Activated CD4-positive, alpha-beta T cell treated with anti-CD3 and anti-CD28 coated beads, Interleukin-2, amount 10 ng/mL, durations not matched to agents 24 days and 14 days (primary cell): ENCODE measurements at regions of chr17 and their contacts with region 1.

Region 1: DNA sequence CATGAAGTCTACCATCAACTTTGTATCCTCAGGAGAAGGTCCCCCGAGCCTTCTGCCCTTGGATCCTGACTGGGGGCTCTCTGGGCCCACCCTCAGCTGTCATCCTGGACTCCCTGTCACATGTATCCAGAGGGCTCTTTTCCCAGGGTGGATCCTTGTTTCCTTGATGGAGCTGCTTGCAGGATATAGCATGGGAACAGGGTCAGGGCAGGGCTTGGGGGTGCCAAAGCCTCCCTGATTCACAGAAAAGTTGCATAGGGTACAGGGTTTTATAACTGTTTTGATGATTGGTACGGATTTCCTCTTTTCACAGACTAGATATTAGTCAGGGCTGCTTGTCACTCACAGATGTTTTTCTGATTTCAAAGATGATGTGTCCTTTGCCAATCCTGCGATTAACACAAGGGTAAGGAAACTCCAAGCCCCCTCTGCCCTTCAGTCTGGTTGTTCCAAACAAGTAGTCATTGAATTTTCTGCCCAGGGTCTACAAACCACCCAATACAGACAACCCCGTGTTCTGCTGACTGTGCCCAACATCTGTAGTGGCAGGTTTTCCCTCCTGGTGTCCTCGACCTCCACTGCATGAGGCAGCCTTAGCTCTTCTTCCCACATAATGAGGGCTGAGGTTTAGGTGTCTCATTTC is 20.6 kb upstream of the SLC35G3 start:
- DNase-seq: peak; percentile 82
- H3K4me3 Mint-ChIP-seq: peak overlapping the region; percentile 80
- H3K27ac Mint-ChIP-seq: peak overlapping the region; percentile 90
- H3K4me1 Mint-ChIP-seq: peaks cover 78% of the 10 kb centered on the region
- H3K27me3 Mint-ChIP-seq: no peaks in the 10 kb centered on the region

Region 2: GRCh38 chr17:35141681-35142466 is 72.9 kb before region 1 on chr17 and contains the start of gene NLE1:
- intact Hi-C with region 1: loop called (anchors 2 kb)
- DNase-seq: peak; percentile 97
- H3K4me3 Mint-ChIP-seq: peak within 1 kb of the TSS; percentile 83
- H3K27ac Mint-ChIP-seq: peak within 1 kb of the TSS; percentile 81
- H3K4me1 Mint-ChIP-seq: peaks cover 17% of the 10 kb centered on the region
- H3K27me3 Mint-ChIP-seq: no peaks in the 10 kb centered on the region
- total RNA-seq, gene NLE1: 45.3 and 47.9 TPM in 2 replicates

Region 3: GRCh38 chr17:35183332-35183731 is 31.4 kb before region 1 on chr17:
- intact Hi-C with region 1: loop called (anchors 5 kb)
- DNase-seq: no peak
- H3K4me3 Mint-ChIP-seq: no peak overlapping the region
- H3K27ac Mint-ChIP-seq: no peak overlapping the region
- H3K4me1 Mint-ChIP-seq: peaks cover 35% of the 10 kb centered on the region
- H3K27me3 Mint-ChIP-seq: no peaks in the 10 kb centered on the region

Region 4: GRCh38 chr17:35254107-35254802 is 39.5 kb after region 1 on chr17:
- intact Hi-C with region 1: no loop called
- DNase-seq: no peak
- H3K4me3 Mint-ChIP-seq: no peak overlapping the region
- H3K27ac Mint-ChIP-seq: peak overlapping the region; percentile 6
- H3K4me1 Mint-ChIP-seq: peaks cover 38% of the 10 kb centered on the region
- H3K27me3 Mint-ChIP-seq: no peaks in the 10 kb centered on the region

Region 5: GRCh38 chr17:35286120-35286781 is 71.5 kb after region 1 on chr17:
- intact Hi-C with region 1: loop called (anchors 1 kb)
- DNase-seq: peak; percentile 66
- H3K4me3 Mint-ChIP-seq: no peak overlapping the region
- H3K27ac Mint-ChIP-seq: peak overlapping the region; percentile 14
- H3K4me1 Mint-ChIP-seq: peaks cover 26% of the 10 kb centered on the region
- H3K27me3 Mint-ChIP-seq: peaks cover 9% of the 10 kb centered on the region

Region 6: DNA sequence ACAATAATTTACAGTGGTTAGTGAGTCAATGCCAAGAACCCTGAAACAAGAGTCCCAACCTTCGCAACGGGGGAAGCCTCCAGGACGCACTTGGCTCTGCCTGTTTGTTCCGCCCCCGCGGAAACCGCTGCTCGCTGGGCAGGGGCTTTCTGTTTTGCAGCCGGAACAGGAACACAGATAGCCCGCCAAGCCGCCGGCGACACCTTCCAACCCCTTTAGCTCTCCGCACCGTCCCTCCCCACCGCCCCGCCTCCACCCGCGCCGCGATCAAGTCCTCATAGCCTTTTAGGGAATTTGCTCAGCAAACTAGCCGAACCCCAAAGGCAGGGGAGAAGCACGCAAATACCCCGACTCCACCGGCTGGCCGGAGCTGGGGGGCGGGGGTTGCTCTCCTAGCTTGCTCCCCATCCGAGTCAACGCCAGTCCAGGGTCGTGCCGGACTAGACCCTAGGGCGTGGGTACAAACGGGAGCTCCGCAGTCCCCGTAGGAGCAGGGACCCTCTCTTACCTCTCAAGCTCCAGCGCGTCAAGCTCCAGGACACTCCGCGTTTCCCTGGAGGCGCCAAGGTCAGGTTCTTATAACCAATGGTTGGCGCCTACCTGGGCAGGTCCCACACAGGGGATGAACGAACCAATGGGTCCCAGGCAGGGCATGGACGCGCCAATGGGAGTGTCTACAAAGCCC is 233.6 kb after region 1 on chr17 and contains the start of gene SLFN13:
- intact Hi-C with region 1: loop called (anchors 1 kb)
- DNase-seq: peak; percentile 95
- H3K4me3 Mint-ChIP-seq: peak within 1 kb of the TSS; percentile 69
- H3K27ac Mint-ChIP-seq: peak within 1 kb of the TSS; percentile 77
- H3K4me1 Mint-ChIP-seq: peaks cover 13% of the 10 kb centered on the region
- H3K27me3 Mint-ChIP-seq: no peaks in the 10 kb centered on the region
- total RNA-seq, gene SLFN13: 34.5 and 36.8 TPM in 2 replicates